Cardiac septum (tissue), 1 donor: ENCODE measurements at regions of chr11 and their contacts with region 1.

Region 1: GRCh38 chr11:809287-810039 is at the start of gene RPLP2:
- DNase-seq: peak; percentile 99
- total RNA-seq, gene RPLP2: 781 TPM

Region 2: DNA sequence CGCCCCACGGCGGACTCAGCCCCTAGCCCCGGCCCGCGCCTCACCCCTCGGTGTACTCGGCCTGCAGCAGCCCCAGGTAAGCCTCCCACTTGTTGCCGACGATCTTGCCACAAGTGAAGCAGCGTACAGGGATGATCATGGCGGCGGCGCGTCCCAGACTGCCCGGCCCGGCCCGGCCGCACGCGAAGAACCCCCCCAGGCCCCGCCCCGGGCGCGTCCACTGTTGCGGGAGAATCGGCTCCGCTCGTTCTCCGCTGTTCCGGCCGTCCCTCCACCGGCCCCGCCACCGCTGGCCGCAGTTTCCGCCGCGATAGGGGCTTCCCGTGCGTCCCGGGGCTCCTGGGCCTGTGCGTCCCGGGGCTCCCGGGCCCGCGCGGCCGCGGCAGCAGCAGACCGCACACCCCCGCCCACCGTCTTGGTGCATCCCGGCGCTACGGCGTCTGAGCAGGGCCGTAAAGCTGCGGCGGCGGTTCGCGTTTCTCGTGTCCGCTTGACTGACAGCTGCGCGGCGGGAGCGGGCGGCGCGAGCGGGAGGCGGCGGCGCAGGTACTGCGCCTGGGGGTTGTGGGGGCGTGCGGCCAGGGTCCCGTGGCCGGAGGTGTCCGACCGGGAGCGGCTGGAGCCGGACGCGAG is 33.0 kb after region 1 on chr11 and contains the starts of genes POLR2L and TSPAN4:
- intact Hi-C with region 1: loop called (anchors 5 kb)
- DNase-seq: peak; percentile 95
- total RNA-seq, gene POLR2L: 202 TPM
- total RNA-seq, gene TSPAN4: 27.9 TPM

Region 3: DNA sequence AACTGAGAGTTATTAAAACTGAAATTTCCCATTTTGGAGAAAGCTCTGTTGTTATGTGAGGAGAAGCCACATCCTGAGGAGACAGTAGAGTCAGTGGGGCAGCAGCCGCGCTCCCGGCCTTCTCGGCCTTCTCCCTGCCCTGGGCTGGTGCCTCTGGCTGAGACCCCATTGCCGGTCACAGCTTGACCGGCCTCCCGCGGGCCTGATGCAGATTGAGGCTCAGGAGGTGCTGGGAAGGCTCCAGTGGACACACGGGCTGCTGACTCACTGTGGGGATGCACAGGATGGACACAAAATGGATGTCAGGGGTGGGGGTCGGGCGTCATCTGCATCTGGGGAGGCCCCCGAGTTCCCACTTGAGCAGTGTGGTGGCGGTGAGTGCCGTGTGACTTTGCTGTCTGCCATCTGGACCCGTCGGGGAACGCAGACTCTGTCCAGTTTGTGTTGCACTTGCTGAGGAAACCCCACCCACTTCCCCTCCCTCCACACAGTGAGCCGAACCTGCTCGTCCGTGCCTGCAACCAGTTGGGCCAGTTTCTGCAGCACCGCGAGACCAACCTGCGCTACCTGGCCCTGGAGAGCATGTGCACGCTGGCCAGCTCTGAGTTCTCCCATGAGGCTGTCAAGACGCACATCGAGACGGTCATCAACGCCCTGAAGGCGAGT is 177.0 kb after region 1 on chr11:
- intact Hi-C with region 1: no loop called
- DNase-seq: no peak

Region 4: DNA sequence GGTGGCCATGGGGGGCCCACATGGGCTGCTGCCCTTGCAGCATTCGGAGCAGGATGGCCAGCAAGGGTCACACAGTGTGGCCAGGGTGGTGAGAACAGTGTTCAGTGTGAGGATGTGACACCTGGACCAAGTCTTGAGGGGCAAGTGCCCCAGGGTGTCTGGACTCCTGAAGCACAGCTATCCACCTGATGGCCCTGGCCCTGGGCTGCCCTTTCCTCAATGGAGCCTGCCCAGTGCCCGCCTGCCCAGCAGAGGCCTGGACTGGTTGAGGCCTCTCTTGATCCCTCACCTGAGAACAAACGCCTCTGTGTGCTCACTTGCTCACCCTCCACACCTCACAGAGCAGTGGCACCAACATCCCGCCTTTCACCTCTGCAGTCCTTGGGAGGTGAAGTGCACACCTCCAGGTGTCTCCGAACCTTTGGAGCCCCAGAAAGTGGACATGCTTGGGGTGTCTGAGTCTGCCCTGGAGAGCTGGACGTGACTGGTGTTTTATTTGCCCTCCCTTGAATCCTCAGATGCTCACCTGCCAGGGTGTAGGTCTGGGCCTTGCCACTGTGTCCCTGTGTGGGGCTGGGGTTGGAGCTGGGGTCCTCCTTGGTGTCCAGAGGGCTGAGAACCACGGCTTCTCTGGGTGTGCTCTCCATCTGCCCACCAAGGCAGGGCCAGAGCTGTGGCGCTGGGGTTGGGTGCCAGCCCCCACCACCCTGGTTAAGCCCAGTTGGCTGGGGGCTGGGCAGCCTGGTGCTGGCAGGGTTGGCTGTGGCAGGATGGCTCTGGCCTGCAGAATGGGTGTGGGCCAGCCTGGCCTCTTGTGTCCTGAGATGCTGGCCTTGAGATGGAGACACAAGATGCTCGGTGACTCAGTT is 261.4 kb after region 1 on chr11:
- intact Hi-C with region 1: no loop called
- DNase-seq: peak; percentile 58